Body of pancreas (tissue), 4 donors: ENCODE measurements at regions of chr14 and their contacts with region 1.

Region 1: DNA sequence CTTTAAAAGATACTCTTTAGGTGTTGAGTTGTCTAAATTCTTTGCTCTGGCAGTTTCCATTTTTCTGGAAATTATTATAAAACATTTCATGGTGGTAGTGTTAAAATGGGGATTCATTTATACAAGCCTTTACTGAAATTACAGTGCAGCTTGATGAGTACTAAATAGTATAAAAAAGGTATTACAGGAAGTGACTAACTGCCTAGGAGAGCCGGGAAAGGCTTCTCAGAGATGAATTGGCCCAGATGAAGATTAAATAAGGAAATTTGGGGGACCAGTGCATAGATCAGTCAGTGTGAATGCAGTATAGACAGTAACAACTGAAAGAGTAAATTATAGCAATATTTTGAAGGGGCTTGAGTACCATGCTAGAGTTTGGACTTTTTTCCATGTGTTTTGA is 7.5 kb downstream of the PSMA6 start:
- DNase-seq: no peak
- ATAC-seq: no peak
- H3K4me3 ChIP-seq: no peak overlapping the region
- H3K27ac ChIP-seq: no peak overlapping the region
- H3K4me1 ChIP-seq: peaks cover 33% of the 10 kb centered on the region
- H3K27me3 ChIP-seq: no peaks in the 10 kb centered on the region
- CTCF ChIP-seq: no peak
- POLR2A ChIP-seq: no peak

Region 2: GRCh38 chr14:34951271-34951670 is 348.4 kb before region 1 on chr14:
- intact Hi-C with region 1: no loop called
- DNase-seq: no peak
- ATAC-seq: no peak
- H3K4me3 ChIP-seq: no peak overlapping the region
- H3K27ac ChIP-seq: no peak overlapping the region
- H3K4me1 ChIP-seq: no peaks in the 10 kb centered on the region
- H3K27me3 ChIP-seq: no peaks in the 10 kb centered on the region
- CTCF ChIP-seq: no peak
- POLR2A ChIP-seq: no peak

Region 3: GRCh38 chr14:35331605-35332516 is 32.2 kb after region 1 on chr14:
- intact Hi-C with region 1: loop called (anchors 5 kb)
- DNase-seq: peak; percentile 63 to 84 (median 76)
- ATAC-seq: peak; percentile 74
- H3K4me3 ChIP-seq: no peak overlapping the region
- H3K27ac ChIP-seq: peak overlapping the region; percentile 74 to 92 (median 76)
- H3K4me1 ChIP-seq: peaks cover 51% of the 10 kb centered on the region
- H3K27me3 ChIP-seq: no peaks in the 10 kb centered on the region
- CTCF ChIP-seq: no peak
- POLR2A ChIP-seq: peak in 2 of 3 donors; percentile 27 to 29